ENCODE measurements at regions of chr7 and their contacts with region 1.

Region 1: GRCh38 chr7:101251871-101252659 is 7.2 kb upstream of the FIS1 start:
- DNase-seq: peak; percentile 99

Region 2: DNA sequence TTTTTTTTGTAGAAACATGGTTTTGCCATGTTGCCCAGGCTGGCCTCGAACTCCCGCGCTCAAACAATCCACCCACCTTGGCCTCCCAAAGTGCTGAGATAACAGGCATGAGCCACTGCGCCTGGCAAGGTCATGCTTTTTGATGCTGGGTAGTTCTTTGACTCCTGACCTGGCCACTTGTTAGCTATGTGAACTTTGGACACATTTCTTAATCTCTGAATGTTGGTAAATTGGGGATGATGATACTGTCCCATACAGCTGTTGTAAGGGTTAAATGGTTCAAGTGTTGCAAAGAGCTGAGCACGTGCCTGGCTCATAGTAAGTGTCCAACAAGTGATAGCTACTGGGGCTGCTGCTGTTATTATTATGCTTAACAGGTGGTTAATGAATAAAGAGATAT is 31.8 kb before region 1 on chr7:
- intact Hi-C with region 1: loop called in 1 of 2 experiments (anchors 2 kb)
- DNase-seq: no peak